Heart right ventricle (tissue), 16 donors: ENCODE measurements at regions of chr20 and their contacts with region 1.

Region 1: GRCh38 chr20:50790651-50791277 is 4.1 kb upstream of the BCAS4 start:
- DNase-seq: peak; percentile 86 to 88
- ATAC-seq: peak; percentile 87 to 94 (median 93)
- H3K4me3 ChIP-seq: peak overlapping the region in 8 of 10 donors; percentile 7 to 34 (median 26)
- H3K27ac ChIP-seq: peak overlapping the region; percentile 47 to 86 (median 77)
- H3K4me1 ChIP-seq: peaks cover 0 to 43% (median 25%) of the 10 kb centered on the region in 9 donors
- H3K27me3 ChIP-seq: peaks cover 0 to 19% (median 3%) of the 10 kb centered on the region in 7 donors
- CTCF ChIP-seq: peak; percentile 30 to 88 (median 70)

Region 2: GRCh38 chr20:50913690-50914375 is 123.1 kb after region 1 on chr20:
- intact Hi-C with region 1: loop called in 1 of 10 experiments (anchors 10 kb)
- DNase-seq: no peak
- ATAC-seq: peak in 5 of 8 donors; percentile 20 to 81 (median 44)
- H3K4me3 ChIP-seq: no peak overlapping the region
- H3K27ac ChIP-seq: no peak overlapping the region
- H3K4me1 ChIP-seq: peaks cover 15 to 96% (median 72%) of the 10 kb centered on the region in 9 donors
- H3K27me3 ChIP-seq: no peaks in the 10 kb centered on the region
- CTCF ChIP-seq: no peak

Region 3: DNA sequence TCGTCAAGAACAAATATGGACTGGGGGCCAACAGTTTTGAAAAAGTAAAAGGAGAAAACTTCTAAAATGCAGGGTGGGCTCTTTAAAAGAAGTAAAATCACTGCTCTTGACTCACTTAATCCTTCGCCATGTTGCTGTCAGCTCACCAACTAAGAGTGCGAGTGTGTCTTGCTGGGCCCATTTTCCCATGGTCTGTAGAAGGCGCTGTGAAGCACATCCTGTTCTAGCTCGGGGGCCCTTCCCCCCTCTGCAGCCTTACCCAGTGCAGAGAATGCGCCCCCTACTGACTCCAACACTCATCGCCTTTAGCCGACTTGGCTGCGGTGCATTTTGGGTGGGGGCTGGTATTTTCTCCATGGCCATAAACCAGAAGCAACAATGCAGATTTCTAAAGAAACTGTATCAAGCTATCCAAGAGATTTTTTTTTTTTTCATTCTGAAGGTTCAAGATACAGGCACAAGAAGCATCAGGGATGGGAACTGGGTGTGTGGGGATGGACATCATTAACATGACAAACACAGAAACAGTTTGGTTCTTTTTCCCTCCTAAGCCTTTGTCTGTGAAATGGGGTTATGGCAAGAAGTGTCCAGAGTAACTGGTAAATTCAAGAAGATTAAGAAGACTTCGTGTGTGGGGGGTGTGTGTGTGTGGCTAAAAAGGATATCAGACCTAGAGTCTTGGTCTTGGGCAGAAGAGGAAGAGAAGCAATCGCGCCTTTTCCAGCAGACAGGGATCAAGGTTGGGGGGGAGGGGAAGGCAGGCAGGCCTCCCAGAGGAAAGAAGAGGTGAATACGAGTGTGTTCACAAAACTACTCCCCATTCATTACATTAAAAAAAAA is 138.8 kb after region 1 on chr20:
- intact Hi-C with region 1: loop called in 8 of 10 experiments (anchors 2 to 10 kb)
- DNase-seq: peak; percentile 74 to 90
- ATAC-seq: peak; percentile 36 to 74 (median 70)
- H3K4me3 ChIP-seq: peak overlapping the region; percentile 70 to 94 (median 78)
- H3K27ac ChIP-seq: peak overlapping the region in 8 of 10 donors; percentile 74 to 100 (median 81)
- H3K4me1 ChIP-seq: peaks cover 0 to 61% (median 51%) of the 10 kb centered on the region in 9 donors
- H3K27me3 ChIP-seq: no peaks in the 10 kb centered on the region
- CTCF ChIP-seq: peak; percentile 53 to 92 (median 79)

Region 4: DNA sequence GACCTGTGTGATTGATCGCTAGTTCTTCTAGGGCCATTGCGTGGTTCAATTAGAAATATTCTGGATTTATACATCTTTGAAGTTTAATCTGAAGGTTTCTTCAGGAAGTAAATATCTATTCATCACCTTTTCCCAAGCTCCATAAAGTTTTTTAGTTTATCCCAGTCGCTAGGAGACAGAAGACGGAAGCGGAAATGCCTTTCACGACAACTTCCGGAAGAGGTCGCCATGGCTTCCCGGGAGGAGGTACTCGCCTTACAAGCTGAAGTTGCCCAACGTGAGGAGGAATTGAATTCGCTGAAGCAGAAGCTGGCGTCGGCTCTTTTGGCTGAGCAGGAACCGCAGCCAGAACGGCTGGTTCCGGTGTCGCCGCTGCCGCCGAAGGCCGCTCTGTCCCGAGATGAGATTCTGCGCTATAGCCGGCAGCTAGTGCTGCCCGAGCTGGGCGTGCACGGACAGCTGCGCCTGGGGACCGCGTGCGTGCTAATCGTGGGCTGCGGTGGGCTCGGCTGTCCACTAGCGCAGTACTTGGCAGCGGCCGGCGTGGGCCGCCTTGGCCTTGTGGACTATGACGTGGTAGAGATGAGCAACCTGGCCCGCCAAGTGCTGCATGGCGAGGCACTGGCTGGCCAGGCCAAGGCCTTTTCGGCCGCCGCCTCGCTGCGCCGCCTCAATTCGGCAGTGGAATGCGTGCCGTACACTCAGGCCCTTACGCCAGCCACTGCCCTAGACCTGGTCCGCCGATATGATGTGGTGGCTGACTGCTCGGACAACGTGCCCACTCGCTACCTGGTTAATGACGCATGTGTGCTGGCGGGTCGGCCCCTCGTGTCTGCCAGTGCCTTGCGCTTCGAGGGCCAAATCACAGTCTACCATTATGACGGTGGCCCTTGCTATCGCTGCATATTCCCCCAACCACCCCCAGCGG is 168.1 kb after region 1 on chr20 and contains the start of gene MOCS3:
- intact Hi-C with region 1: loop called in 2 of 10 experiments (anchors 2 to 5 kb)
- DNase-seq: peak; percentile 72 to 90
- ATAC-seq: peak; percentile 84 to 93 (median 88)
- H3K4me3 ChIP-seq: peak within 1 kb of the TSS; percentile 77 to 100 (median 90)
- H3K27ac ChIP-seq: peak within 1 kb of the TSS; percentile 83 to 97 (median 93)
- H3K4me1 ChIP-seq: peaks cover 9 to 60% (median 45%) of the 10 kb centered on the region in 9 donors
- H3K27me3 ChIP-seq: no peaks in the 10 kb centered on the region
- CTCF ChIP-seq: peak in 2 of 9 donors; percentile 8 to 19
- total RNA-seq, gene MOCS3: 2.3 to 3.2 (median 2.6) TPM

Region 5: DNA sequence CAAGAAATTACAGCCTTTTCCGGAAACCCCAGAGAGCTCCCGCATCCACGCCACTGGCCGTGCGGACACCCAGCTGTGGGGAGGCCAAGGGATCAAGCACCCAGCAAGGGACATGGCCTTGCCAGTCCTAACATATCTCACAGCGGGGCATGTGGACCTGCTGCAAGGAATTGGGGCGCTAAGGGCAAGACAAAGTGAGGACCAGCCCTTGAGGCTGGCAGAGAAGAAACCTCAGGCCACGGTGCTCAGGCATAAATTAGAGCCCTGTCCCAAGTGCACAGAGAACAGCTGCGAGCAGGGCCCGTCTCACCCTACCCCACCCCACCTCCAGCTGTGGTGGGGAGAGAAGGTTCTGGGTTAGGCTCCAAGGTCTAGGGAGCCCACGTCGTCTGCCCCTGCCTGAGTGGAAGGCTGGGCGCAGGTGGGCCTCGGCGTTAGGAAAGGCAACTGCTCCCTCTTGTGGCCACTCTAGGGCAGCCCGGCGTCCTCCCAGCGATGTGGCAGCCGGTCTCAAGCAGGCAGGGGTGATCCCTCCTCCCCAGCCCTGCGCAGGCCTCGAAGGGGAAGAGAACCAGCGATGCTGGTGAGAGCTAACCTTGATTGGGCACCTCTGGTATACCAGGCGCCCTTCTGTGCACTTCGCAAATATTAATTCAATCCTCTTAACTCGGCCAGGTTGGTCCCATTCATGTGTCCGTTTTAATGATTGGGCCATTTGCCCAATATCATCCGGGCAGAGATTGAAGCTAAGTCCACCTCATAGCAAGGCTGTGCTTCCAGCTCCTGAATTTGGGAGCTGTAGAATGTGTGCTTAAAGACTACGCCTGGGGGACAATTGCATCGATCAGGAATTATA is 516.0 kb after region 1 on chr20:
- intact Hi-C with region 1: loop called in 4 of 10 experiments (anchors 10 kb)
- DNase-seq: peak; percentile 64 to 73
- ATAC-seq: peak; percentile 90 to 96 (median 93)
- H3K4me3 ChIP-seq: no peak overlapping the region
- H3K27ac ChIP-seq: no peak overlapping the region
- H3K4me1 ChIP-seq: peaks cover 0 to 8% (median 0%) of the 10 kb centered on the region in 9 donors
- H3K27me3 ChIP-seq: peaks cover 0 to 15% (median 0%) of the 10 kb centered on the region in 7 donors
- CTCF ChIP-seq: peak; percentile 84 to 96 (median 94)